ENCODE measurements at regions of chr6 and their contacts with region 1.

Region 1: GRCh38 chr6:7129784-7130569 is 22.2 kb downstream of the RREB1 start:
- DNase-seq: peak; percentile 89
- H3K4me3 Mint-ChIP-seq: peak overlapping the region; percentile 20
- H3K27ac Mint-ChIP-seq: peak overlapping the region; percentile 84
- H3K4me1 Mint-ChIP-seq: peaks cover 40% of the 10 kb centered on the region
- H3K27me3 Mint-ChIP-seq: no peaks in the 10 kb centered on the region
- CTCF ChIP-seq: no peak

Region 2: GRCh38 chr6:7058250-7058923 is 71.6 kb before region 1 on chr6:
- CTCF ChIA-PET with region 1: no interaction called
- POLR2A ChIA-PET with region 1: interaction called, 14 read pairs
- intact Hi-C with region 1: no loop called
- DNase-seq: peak; percentile 99
- H3K4me3 Mint-ChIP-seq: peak overlapping the region; percentile 44
- H3K27ac Mint-ChIP-seq: peak overlapping the region; percentile 91
- H3K4me1 Mint-ChIP-seq: peaks cover 30% of the 10 kb centered on the region
- H3K27me3 Mint-ChIP-seq: no peaks in the 10 kb centered on the region
- CTCF ChIP-seq: no peak

Region 3: GRCh38 chr6:7112741-7113313 is 17.1 kb before region 1 on chr6:
- CTCF ChIA-PET with region 1: interaction called, 6 read pairs
- POLR2A ChIA-PET with region 1: interaction called, 105 read pairs
- intact Hi-C with region 1: no loop called
- DNase-seq: peak; percentile 20
- H3K4me3 Mint-ChIP-seq: peak overlapping the region; percentile 54
- H3K27ac Mint-ChIP-seq: peak overlapping the region; percentile 46
- H3K4me1 Mint-ChIP-seq: peaks cover 26% of the 10 kb centered on the region
- H3K27me3 Mint-ChIP-seq: no peaks in the 10 kb centered on the region
- CTCF ChIP-seq: no peak

Region 4: GRCh38 chr6:7119272-7119801 is 10.6 kb before region 1 on chr6:
- CTCF ChIA-PET with region 1: interaction called, 3 read pairs
- POLR2A ChIA-PET with region 1: interaction called, 105 read pairs
- intact Hi-C with region 1: no loop called
- DNase-seq: no peak
- H3K4me3 Mint-ChIP-seq: no peak overlapping the region
- H3K27ac Mint-ChIP-seq: no peak overlapping the region
- H3K4me1 Mint-ChIP-seq: peaks cover 27% of the 10 kb centered on the region
- H3K27me3 Mint-ChIP-seq: no peaks in the 10 kb centered on the region
- CTCF ChIP-seq: no peak

Region 5: GRCh38 chr6:7378740-7379139 is 248.8 kb after region 1 on chr6:
- CTCF ChIA-PET with region 1: no interaction called
- POLR2A ChIA-PET with region 1: no interaction called
- intact Hi-C with region 1: no loop called
- DNase-seq: no peak
- H3K4me3 Mint-ChIP-seq: no peak overlapping the region
- H3K27ac Mint-ChIP-seq: no peak overlapping the region
- H3K4me1 Mint-ChIP-seq: no peaks in the 10 kb centered on the region
- H3K27me3 Mint-ChIP-seq: no peaks in the 10 kb centered on the region
- CTCF ChIP-seq: no peak

Measured in MCF 10A (cell line).